ENCODE measurements at regions of chr7 and their contacts with region 1.

Region 1: DNA sequence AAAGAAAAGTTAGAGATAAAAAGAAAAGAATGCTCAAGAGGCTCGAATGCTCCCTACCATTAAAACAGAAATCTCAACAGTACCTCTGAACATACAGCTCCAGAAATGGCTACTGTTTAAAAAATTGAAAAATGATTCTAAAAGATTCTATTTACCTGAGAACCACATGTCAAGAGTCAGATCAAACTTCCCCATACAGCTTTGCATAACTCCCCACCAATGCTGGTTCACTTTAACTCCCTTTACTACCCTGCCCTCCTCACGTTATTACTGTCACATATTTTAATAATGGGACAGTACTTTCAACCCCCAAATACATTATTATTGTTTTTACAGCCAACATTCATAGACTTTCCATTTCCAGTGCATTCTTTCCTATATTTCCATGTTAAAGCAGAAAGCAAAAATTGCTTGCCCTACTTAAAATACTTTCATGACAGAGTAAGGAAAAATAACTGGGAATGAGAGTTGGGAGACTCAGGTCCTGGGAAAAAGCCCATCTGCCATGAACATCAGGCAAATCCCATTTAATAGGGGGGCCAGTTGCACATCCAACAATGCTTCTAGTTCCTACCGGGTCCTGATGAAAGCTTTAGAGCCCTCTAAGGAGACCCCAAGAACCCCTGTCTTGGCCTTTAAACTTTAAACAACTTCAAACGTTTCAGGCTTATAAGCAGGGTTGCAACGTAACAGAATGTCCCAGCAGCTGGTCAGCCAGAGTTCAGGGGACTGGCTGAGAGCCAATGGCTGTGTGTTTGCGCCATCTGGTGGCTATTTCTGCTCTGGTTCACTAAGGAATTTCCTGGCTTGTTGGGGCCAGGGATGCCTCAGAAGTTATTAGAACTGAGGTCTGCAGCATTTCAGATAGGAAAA is 247.4 kb downstream of the ELMO1 start:
- DNase-seq: peak; percentile 84 to 88
- ATAC-seq: peak; percentile 92
- H3K4me3 ChIP-seq: no peak overlapping the region
- H3K27ac ChIP-seq: peak overlapping the region; percentile 77 to 90
- H3K4me1 ChIP-seq: peaks cover 2 to 3% of the 10 kb centered on the region in 2 donors
- H3K27me3 ChIP-seq: no peaks in the 10 kb centered on the region

Region 2: GRCh38 chr7:36487756-36488336 is 713.4 kb before region 1 on chr7:
- intact Hi-C with region 1: loop called in 1 of 2 experiments (anchors 10 kb)
- DNase-seq: no peak
- ATAC-seq: no peak
- H3K4me3 ChIP-seq: no peak overlapping the region
- H3K27ac ChIP-seq: no peak overlapping the region
- H3K4me1 ChIP-seq: no peaks in the 10 kb centered on the region
- H3K27me3 ChIP-seq: no peaks in the 10 kb centered on the region

Region 3: GRCh38 chr7:36967387-36967786 is 233.9 kb before region 1 on chr7:
- intact Hi-C with region 1: loop called in 1 of 2 experiments (anchors 1 kb)
- DNase-seq: peak in 1 of 2 donors; percentile 67
- ATAC-seq: peak; percentile 90
- H3K4me3 ChIP-seq: no peak overlapping the region
- H3K27ac ChIP-seq: no peak overlapping the region
- H3K4me1 ChIP-seq: no peaks in the 10 kb centered on the region
- H3K27me3 ChIP-seq: no peaks in the 10 kb centered on the region

Region 4: GRCh38 chr7:36986429-36987362 is 214.5 kb before region 1 on chr7:
- intact Hi-C with region 1: loop called in 1 of 2 experiments (anchors 5 kb)
- DNase-seq: peak; percentile 63 to 88
- ATAC-seq: peak; percentile 82
- H3K4me3 ChIP-seq: no peak overlapping the region
- H3K27ac ChIP-seq: no peak overlapping the region
- H3K4me1 ChIP-seq: no peaks in the 10 kb centered on the region
- H3K27me3 ChIP-seq: peaks cover 0 to 2% of the 10 kb centered on the region in 2 donors